A549 (cell line): ENCODE measurements at regions of chr17 and their contacts with region 1.

Region 1: DNA sequence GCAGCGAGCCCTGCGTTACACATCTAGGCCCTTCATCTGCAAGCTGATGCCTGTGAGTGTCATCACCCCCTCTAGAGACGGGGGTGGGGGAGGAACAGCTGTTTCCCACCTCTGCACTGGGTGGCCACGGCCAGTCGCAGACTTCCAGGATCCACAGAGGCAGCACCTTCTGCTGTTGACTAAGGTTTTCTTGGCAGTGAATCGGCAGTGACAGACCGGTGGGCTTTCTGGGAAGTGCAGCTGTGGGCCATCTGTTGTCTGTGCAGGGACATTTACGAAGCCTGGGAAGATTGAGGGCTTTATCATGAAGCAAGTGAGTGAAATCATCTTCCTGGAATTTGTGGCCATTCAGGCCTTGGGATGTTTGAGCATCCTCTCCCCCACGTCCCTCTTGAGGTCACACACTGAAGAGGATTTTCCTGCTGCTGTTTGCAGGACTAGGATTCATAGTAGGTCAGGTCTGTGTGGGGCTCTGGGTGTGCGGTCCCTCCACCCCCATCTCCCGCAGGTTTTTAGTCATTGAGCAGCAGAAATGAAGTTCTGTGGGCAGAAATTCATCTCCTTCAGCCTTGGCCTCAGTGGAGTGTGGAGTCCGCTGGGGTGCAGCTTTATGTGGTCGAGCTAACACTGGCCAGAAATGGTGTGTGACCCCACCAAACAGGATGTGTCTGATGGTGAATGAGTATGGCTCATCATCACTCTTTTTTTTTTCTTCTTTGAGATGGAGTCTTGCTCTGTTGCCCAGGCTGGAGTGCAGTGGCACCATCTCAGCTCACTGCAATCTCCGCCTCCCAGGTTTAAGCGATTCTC is 12.0 kb downstream of the PGS1 start:
- DNase-seq: peak; percentile 59 to 75
- ATAC-seq: peak; percentile 80
- H3K4me3 ChIP-seq: no peak overlapping the region
- H3K27ac ChIP-seq: peak overlapping the region; percentile 18 to 82; a peak in 4 of 6 replicates
- H3K4me1 ChIP-seq: peaks cover 36% of the 10 kb centered on the region
- CTCF ChIP-seq: no peak
- EP300 ChIP-seq: no peak; a peak in 1 of 5 replicates
- POLR2A ChIP-seq: no peak
- RAD21 ChIP-seq: no peak

Region 2: DNA sequence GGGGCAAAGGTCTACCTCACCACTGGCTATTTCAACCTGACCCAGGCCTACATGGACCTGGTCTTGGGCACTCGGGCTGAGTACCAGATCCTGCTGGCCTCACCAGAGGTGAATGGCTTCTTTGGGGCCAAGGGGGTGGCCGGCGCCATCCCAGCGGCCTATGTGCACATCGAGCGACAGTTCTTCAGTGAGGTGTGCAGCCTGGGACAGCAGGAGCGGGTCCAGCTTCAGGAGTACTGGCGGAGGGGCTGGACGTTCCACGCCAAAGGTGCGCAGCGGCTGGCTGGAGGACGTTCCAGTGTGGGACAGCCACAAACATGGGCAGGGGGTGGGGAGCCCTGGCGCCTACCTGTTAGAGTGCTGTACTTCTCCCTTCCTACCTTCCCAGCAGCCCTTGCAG is 13.4 kb after region 1 on chr17:
- CTCF ChIA-PET with region 1: interaction called, 13 read pairs
- POLR2A ChIA-PET with region 1: no interaction called
- DNase-seq: no peak
- ATAC-seq: no peak
- H3K4me3 ChIP-seq: no peak overlapping the region
- H3K27ac ChIP-seq: no peak overlapping the region
- H3K4me1 ChIP-seq: peaks cover 17% of the 10 kb centered on the region
- CTCF ChIP-seq: no peak
- EP300 ChIP-seq: no peak
- POLR2A ChIP-seq: no peak
- RAD21 ChIP-seq: no peak

Region 3: GRCh38 chr17:78412403-78412802 is 22.0 kb after region 1 on chr17:
- CTCF ChIA-PET with region 1: interaction called, 12 read pairs
- POLR2A ChIA-PET with region 1: no interaction called
- DNase-seq: peak; percentile 51 to 58
- ATAC-seq: peak; percentile 51 to 69; a peak in 4 of 6 replicates
- H3K4me3 ChIP-seq: no peak overlapping the region
- H3K27ac ChIP-seq: no peak overlapping the region
- H3K4me1 ChIP-seq: peaks cover 25% of the 10 kb centered on the region
- CTCF ChIP-seq: peak; percentile 51
- EP300 ChIP-seq: no peak
- POLR2A ChIP-seq: no peak
- RAD21 ChIP-seq: peak in 1 of 2 experiments; percentile 26; a peak in 1 of 5 replicates